Mammary epithelial cell (primary cell): ENCODE measurements at regions of chr3 and their contacts with region 1.

Region 1: DNA sequence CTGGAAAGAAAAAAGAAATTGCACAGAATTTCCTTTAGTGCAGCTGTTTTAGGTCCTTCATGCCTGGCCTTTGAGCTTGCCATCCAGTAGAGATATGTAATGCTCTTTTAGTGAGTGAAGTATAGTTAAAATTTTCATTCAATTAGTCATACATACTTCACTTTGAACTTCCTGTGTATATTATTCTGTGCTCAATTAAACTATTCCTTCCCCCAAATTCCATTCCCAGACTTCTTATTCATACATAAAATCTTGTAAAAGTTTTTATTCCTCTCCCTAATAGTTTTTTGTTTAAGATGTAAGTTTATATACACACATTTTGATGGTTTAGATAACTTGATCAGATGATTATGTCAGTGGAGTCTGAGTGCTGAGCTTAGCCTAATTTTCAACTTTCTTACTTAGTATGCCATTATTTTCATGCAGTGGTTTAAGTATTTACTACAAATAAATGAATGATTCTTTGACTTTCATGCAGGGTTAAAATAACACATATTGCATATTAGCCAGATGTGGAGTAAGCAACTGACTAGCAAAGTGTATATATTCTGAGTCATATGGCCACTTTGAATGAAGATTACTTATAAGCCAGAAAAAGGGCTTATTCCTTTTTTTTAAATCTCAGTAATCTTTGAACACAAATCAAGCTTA is 42.5 kb upstream of the ABHD10 start:
- DNase-seq: peak; percentile 37
- H3K4me3 ChIP-seq: no peak overlapping the region
- H3K27ac ChIP-seq: peak overlapping the region; percentile 99
- H3K4me1 ChIP-seq: peaks cover 29% of the 10 kb centered on the region
- H3K27me3 ChIP-seq: no peaks in the 10 kb centered on the region
- CTCF ChIP-seq: no peak

Region 2: DNA sequence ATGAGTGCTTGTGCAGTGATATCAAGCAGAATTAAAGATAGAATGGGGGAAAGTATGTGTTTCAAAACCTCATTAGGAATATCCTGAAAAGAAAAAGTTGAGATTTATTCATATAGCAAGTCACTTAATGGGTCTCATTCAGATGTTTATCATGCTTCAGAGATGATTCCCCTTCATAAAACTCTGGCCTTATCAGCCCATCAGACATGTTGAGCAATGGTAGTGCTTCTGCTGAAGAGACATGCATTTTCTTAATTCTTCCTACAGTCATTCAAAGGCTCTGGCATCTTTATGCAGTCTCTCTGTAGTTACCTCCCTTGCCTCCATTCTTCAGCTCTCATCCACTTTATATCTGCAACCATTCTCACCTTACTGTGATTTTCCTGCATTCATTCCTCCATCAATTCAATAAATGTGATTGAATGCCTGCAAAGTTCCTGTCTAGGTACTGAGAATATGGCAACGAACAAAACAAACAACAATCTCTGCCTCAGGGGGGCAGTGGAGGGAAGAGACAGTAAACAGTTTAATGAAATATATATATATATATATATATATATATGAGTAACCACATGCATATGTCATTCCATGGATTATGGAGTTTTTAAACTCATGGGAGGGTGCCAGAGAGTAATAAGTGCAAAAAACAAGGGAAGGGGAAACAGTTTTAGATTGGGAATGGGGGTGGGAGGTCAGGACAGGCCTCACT is 726.2 kb before region 1 on chr3:
- CTCF ChIA-PET with region 1: no interaction called
- dilution Hi-C with region 1: no loop called
- in situ Hi-C with region 1: no loop called
- intact Hi-C with region 1: no loop called
- DNase-seq: peak; percentile 28
- H3K4me3 ChIP-seq: no peak overlapping the region
- H3K27ac ChIP-seq: no peak overlapping the region
- H3K4me1 ChIP-seq: no peaks in the 10 kb centered on the region
- H3K27me3 ChIP-seq: no peaks in the 10 kb centered on the region
- CTCF ChIP-seq: peak in 1 of 2 donors; percentile 31

Region 3: GRCh38 chr3:111895079-111895478 is 41.2 kb before region 1 on chr3:
- CTCF ChIA-PET with region 1: interaction called, 12 read pairs
- dilution Hi-C with region 1: no loop called
- in situ Hi-C with region 1: no loop called
- intact Hi-C with region 1: no loop called
- DNase-seq: no peak
- H3K4me3 ChIP-seq: no peak overlapping the region
- H3K27ac ChIP-seq: no peak overlapping the region
- H3K4me1 ChIP-seq: no peaks in the 10 kb centered on the region
- H3K27me3 ChIP-seq: no peaks in the 10 kb centered on the region
- CTCF ChIP-seq: peak; percentile 28 to 48

Region 4: GRCh38 chr3:111904376-111905241 is 31.7 kb before region 1 on chr3:
- CTCF ChIA-PET with region 1: no interaction called
- dilution Hi-C with region 1: no loop called
- in situ Hi-C with region 1: no loop called
- intact Hi-C with region 1: loop called (anchors 1 kb)
- DNase-seq: peak; percentile 89
- H3K4me3 ChIP-seq: no peak overlapping the region
- H3K27ac ChIP-seq: peak overlapping the region; percentile 85
- H3K4me1 ChIP-seq: peaks cover 37% of the 10 kb centered on the region
- H3K27me3 ChIP-seq: no peaks in the 10 kb centered on the region
- CTCF ChIP-seq: peak; percentile 26 to 51

Region 5: GRCh38 chr3:111923095-111923771 is 13.1 kb before region 1 on chr3:
- CTCF ChIA-PET with region 1: no interaction called
- dilution Hi-C with region 1: no loop called
- in situ Hi-C with region 1: no loop called
- intact Hi-C with region 1: loop called (anchors 1 kb)
- DNase-seq: peak; percentile 87
- H3K4me3 ChIP-seq: no peak overlapping the region
- H3K27ac ChIP-seq: peak overlapping the region; percentile 94
- H3K4me1 ChIP-seq: peaks cover 26% of the 10 kb centered on the region
- H3K27me3 ChIP-seq: no peaks in the 10 kb centered on the region
- CTCF ChIP-seq: no peak

Region 6: GRCh38 chr3:112605285-112605684 is 669.0 kb after region 1 on chr3:
- CTCF ChIA-PET with region 1: no interaction called
- dilution Hi-C with region 1: no loop called
- in situ Hi-C with region 1: no loop called
- intact Hi-C with region 1: no loop called
- DNase-seq: peak; percentile 22
- H3K4me3 ChIP-seq: no peak overlapping the region
- H3K27ac ChIP-seq: no peak overlapping the region
- H3K4me1 ChIP-seq: no peaks in the 10 kb centered on the region
- H3K27me3 ChIP-seq: no peaks in the 10 kb centered on the region
- CTCF ChIP-seq: no peak